Colonic mucosa (tissue), 4 donors: ENCODE measurements at regions of chr2 and their contacts with region 1.

Region 1: GRCh38 chr2:60581433-60582282 is 28.2 kb upstream of the BCL11A start:
- DNase-seq: peak; percentile 59
- H3K4me3 ChIP-seq: peak overlapping the region; percentile 37
- H3K27ac ChIP-seq: no peak overlapping the region
- H3K4me1 ChIP-seq: peaks cover 4% of the 10 kb centered on the region
- H3K27me3 ChIP-seq: no peaks in the 10 kb centered on the region
- CTCF ChIP-seq: peak; percentile 87

Region 2: DNA sequence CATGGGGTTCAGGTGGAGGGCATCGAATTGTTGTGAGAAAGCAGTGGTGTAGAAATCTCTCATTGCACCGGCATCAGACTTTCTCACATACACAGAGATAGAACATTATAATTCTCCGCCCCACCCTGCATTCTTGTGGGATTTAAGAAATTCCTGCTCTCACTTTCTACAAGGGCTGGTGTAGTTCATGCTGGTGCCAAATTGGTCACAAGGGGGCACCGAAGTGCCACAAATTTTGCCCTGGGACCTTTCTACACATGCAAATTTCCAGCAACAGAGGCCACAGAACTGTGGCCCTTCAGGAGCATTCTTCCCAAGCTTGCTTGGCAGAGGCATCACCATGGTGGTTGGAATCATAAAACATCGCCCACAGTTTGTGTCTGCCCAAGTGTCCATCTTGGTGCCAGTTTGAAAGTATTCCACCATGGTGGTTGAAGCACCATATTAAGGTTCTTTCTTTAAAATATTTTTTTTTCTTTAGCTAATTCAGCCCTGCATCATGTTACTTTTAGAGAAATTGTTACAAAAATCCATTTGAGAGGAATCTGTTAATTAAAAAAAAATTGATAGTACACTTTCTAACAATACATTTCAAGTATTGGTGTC is 1819.4 kb before region 1 on chr2:
- intact Hi-C with region 1: loop called (anchors 5 kb)
- DNase-seq: peak; percentile 19
- H3K4me3 ChIP-seq: no peak overlapping the region
- H3K27ac ChIP-seq: no peak overlapping the region
- H3K4me1 ChIP-seq: no peaks in the 10 kb centered on the region
- H3K27me3 ChIP-seq: no peaks in the 10 kb centered on the region
- CTCF ChIP-seq: peak; percentile 37

Region 3: DNA sequence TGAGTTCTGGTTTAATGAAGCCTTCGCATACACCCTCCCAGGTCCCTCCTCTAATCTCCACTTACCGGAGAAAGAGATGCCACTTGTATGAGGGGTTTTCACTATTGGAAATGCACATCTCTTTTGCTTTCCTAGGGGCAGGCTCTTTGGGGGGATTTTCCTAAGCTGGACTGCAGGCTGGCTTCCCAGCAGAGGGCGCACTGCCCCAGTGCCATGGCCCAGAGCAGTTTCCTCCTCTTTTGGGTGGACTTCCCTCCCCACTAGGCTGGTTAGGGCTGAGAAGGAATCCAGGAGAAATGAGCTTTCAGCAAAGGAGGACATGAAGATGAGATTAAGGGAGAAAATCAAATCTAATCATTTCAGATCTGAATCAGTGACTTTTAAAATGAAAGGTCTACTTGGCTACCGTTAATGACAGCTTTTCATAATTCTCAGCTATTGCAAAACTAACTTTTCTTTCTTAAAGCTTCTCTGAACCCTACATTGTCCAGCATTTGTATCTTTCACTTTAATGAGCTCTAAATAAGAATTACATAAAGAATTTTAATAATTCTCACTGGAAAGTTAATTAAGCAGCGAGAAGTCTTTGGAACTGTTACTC is 1556.4 kb before region 1 on chr2:
- intact Hi-C with region 1: loop called (anchors 10 kb)
- DNase-seq: peak; percentile 19
- H3K4me3 ChIP-seq: no peak overlapping the region
- H3K27ac ChIP-seq: no peak overlapping the region
- H3K4me1 ChIP-seq: no peaks in the 10 kb centered on the region
- H3K27me3 ChIP-seq: no peaks in the 10 kb centered on the region
- CTCF ChIP-seq: peak; percentile 51

Region 4: DNA sequence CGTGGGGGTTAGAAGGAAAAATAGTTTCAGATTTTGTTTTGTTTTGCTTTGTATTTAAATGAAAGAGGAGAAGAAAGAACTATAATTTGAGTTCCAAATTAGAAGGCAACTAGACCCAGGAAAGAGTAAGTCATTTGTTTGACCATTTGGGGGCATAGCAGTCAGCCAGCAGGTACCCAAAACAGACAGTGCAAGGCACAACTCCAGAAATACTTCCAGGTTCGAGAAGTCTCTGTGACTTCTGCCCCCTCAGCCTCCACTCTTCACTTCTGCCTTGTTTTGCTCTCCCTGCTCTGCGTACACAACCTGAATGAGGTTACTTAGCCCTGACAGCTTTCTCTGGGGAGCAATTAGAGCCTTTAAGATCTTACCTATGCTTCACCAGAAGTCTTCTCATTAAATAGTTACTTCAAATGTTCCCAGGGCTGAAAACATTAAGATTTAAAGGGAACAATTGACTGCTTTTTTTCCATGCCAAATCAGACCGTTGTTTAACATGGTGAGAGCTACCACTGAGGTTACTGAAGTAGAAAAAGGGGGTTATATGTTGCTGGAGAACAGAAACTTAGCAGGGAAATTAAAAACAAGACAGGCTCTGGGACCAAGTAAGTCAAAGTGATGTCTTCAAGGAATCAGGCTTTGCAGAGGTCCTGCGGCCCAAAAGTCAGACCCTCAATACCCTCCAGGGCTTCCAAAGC is 245.1 kb before region 1 on chr2:
- intact Hi-C with region 1: no loop called
- DNase-seq: no peak
- H3K4me3 ChIP-seq: no peak overlapping the region
- H3K27ac ChIP-seq: no peak overlapping the region
- H3K4me1 ChIP-seq: no peaks in the 10 kb centered on the region
- H3K27me3 ChIP-seq: no peaks in the 10 kb centered on the region
- CTCF ChIP-seq: no peak

Region 5: DNA sequence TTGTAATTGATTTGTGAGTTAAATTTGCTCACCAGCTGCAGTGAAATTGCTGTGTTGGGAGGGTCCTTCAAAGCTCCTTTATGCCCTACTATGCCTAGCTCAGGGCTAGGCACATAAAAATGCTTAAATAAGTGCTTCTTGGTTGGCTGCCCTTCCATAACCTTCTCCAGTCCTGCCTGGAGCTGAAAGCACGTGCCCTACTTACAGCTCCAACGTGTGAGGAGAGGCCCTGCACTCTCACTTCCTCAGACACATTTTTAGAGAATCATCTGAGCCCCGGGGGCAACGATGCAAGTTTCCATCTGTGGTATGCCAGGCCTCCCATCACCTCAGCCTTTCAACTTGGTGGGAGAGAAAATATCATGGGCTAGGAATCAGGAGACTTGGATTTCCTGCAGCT is 230.9 kb before region 1 on chr2:
- intact Hi-C with region 1: no loop called
- DNase-seq: no peak
- H3K4me3 ChIP-seq: no peak overlapping the region
- H3K27ac ChIP-seq: no peak overlapping the region
- H3K4me1 ChIP-seq: no peaks in the 10 kb centered on the region
- H3K27me3 ChIP-seq: no peaks in the 10 kb centered on the region
- CTCF ChIP-seq: no peak